ENCODE measurements at regions of chr11 and their contacts with region 1.

Region 1: GRCh38 chr11:31826536-31827438 is 15.7 kb upstream of the PAX6 start:
- DNase-seq: no peak
- H3K4me3 ChIP-seq: no peak overlapping the region
- H3K27ac ChIP-seq: no peak overlapping the region
- H3K27me3 ChIP-seq: peaks cover 82% of the 10 kb centered on the region
- CTCF ChIP-seq: no peak

Region 2: GRCh38 chr11:32176223-32176934 is 349.6 kb after region 1 on chr11:
- in situ Hi-C with region 1: no loop called
- DNase-seq: peak; percentile 81
- H3K4me3 ChIP-seq: no peak overlapping the region
- H3K27ac ChIP-seq: no peak overlapping the region
- H3K27me3 ChIP-seq: no peaks in the 10 kb centered on the region
- CTCF ChIP-seq: peak; percentile 89

Region 3: GRCh38 chr11:32435511-32435941 is 608.7 kb after region 1 on chr11 and contains the start of gene WT1:
- in situ Hi-C with region 1: loop called (anchors 10 kb)
- DNase-seq: no peak
- H3K4me3 ChIP-seq: no peak within 1 kb of the TSS
- H3K27ac ChIP-seq: no peak within 1 kb of the TSS
- H3K27me3 ChIP-seq: peaks cover 95% of the 10 kb centered on the region
- CTCF ChIP-seq: no peak